ENCODE measurements at regions of chr11 and their contacts with region 1.

Region 1: DNA sequence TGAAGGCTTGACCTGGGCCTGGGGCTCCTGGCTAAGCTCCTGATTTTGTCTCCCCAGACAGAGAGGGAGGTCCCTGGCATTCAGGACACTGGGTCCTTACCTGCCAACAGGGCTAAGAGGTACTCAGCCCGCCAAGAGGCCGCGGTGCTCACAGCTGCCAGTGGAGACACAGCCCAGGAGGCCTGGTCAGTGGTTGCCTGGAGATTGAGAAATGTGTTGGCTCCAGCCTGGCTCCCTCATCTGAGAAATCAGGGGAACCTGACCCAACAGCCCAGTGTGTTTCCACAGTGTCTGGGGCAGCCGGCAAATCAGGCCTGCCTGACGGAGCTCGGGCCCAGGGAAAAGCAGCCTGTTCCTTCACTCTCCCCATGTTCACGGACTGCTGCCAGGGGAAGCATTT is 79.4 kb upstream of the NAV2 start:
- DNase-seq: no peak
- ATAC-seq: no peak
- H3K4me3 ChIP-seq: no peak overlapping the region
- H3K27ac ChIP-seq: no peak overlapping the region
- H3K4me1 ChIP-seq: peaks cover 25% of the 10 kb centered on the region
- H3K27me3 ChIP-seq: no peaks in the 10 kb centered on the region
- CTCF ChIP-seq: no peak

Region 2: GRCh38 chr11:19679952-19680828 is 46.9 kb after region 1 on chr11:
- CTCF ChIA-PET with region 1: no interaction called
- POLR2A ChIA-PET with region 1: interaction called, 4 read pairs
- intact Hi-C with region 1: loop called (anchors 2 kb)
- DNase-seq: peak; percentile 97
- ATAC-seq: peak; percentile 93
- H3K4me3 ChIP-seq: peak overlapping the region; percentile 20; the same call in 1 of the 2 replicates
- H3K27ac ChIP-seq: peak overlapping the region; percentile 66
- H3K4me1 ChIP-seq: peaks cover 29% of the 10 kb centered on the region
- H3K27me3 ChIP-seq: no peaks in the 10 kb centered on the region
- CTCF ChIP-seq: no peak

Region 3: GRCh38 chr11:19698493-19699292 is 65.4 kb after region 1 on chr11:
- CTCF ChIA-PET with region 1: no interaction called
- POLR2A ChIA-PET with region 1: no interaction called
- intact Hi-C with region 1: no loop called
- DNase-seq: peak; percentile 38
- ATAC-seq: no peak
- H3K4me3 ChIP-seq: no peak overlapping the region
- H3K27ac ChIP-seq: no peak overlapping the region
- H3K4me1 ChIP-seq: no peaks in the 10 kb centered on the region
- H3K27me3 ChIP-seq: no peaks in the 10 kb centered on the region
- CTCF ChIP-seq: no peak

Region 4: DNA sequence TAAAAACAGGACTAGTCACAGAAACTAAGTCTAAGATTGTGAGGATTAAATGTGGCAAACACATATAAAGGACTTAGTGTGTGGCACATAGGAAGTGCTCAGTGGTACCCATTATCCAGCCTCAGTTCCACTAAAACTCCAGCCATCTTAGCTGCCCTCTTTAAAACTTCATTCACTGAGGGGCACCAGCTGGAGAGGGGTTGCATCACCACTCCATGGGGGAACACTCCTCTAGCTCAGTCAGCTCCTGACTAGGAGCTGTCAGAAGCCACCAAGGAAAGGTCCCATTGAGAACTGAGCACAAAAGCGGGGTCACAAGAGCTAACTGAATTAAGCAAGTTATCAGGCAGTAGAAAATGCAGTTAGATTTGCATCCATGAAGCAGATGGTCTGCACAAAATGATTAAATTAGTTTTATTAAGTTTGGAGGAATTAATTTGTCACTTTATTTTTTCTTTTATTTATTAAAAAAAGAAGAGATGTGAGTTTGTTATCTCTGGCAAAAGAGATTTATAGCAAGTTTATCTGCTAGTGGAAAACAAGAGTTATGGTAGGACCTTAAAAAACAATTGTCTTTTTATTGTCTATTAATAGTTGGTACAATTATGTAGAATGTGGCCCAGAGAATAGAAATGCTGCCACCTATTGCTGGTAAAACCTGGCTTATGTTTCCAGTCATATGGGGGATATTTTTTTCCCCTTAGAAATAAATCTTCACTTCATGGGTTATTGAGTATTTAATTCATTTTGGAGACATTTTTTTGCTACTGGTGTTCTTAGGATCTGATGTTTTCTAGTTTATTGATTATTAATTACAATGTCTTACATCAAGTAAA is 175.0 kb after region 1 on chr11:
- CTCF ChIA-PET with region 1: no interaction called
- POLR2A ChIA-PET with region 1: no interaction called
- intact Hi-C with region 1: no loop called
- DNase-seq: peak; percentile 21
- ATAC-seq: no peak
- H3K4me3 ChIP-seq: no peak overlapping the region
- H3K27ac ChIP-seq: no peak overlapping the region
- H3K4me1 ChIP-seq: peaks cover 30% of the 10 kb centered on the region
- H3K27me3 ChIP-seq: no peaks in the 10 kb centered on the region
- CTCF ChIP-seq: peak; percentile 56

Measured in PC-3 (cell line).